ENCODE measurements at regions of chr2 and their contacts with region 1.

Region 1: DNA sequence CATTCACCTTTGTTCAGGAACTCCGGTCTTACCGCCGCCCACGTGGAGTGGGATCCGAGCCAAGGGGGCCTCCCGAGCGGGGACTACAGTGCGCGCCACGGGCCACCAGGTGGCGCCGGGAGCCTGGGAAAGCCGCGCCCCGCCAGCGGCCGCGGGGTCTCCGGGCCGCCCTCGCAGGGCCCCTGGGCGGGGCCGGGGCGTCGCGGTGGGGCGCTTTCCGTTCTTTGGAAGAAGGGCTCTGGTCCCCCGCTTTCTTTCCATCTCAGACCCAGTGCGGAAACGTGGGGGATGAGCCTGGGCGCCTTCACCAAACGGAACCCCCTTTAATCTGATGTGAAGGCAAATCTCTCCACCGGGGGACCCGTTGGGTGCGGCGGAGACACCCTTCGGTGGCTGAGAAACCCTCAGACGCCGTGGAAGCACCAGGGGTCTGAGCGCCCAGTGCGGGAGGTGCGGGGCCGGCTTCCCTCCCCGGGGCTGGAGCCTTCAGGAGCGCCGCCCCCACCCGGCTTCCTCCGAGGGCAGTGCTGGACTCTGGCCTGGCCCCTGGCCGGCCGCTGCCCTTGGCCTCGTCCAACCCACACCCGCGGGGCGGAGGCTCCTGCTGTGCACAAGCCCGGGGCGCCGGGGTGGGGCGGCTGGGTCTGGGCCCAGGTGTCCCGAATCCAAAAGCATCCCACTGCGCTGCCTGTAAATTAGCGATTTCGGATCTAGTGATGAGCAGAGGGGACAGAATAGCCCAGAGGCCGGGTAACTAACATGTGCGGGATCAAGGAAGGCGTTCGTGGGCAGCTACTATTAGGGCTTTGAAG is 44.6 kb downstream of the GORASP2 start:
- DNase-seq: peak; percentile 87 to 95
- ATAC-seq: peak; percentile 97
- H3K4me3 ChIP-seq: peak overlapping the region; percentile 29 to 40
- H3K27ac ChIP-seq: peak overlapping the region in 1 of 2 donors; percentile 9
- H3K4me1 ChIP-seq: no peaks in the 10 kb centered on the region
- H3K27me3 ChIP-seq: no peaks in the 10 kb centered on the region

Region 2: GRCh38 chr2:170639635-170640034 is 334.1 kb before region 1 on chr2:
- intact Hi-C with region 1: no loop called
- DNase-seq: no peak
- ATAC-seq: no peak
- H3K4me3 ChIP-seq: no peak overlapping the region
- H3K27ac ChIP-seq: no peak overlapping the region
- H3K4me1 ChIP-seq: no peaks in the 10 kb centered on the region
- H3K27me3 ChIP-seq: no peaks in the 10 kb centered on the region

Region 3: GRCh38 chr2:170886386-170886785 is 87.3 kb before region 1 on chr2:
- intact Hi-C with region 1: no loop called
- DNase-seq: no peak
- ATAC-seq: no peak
- H3K4me3 ChIP-seq: no peak overlapping the region
- H3K27ac ChIP-seq: no peak overlapping the region
- H3K4me1 ChIP-seq: no peaks in the 10 kb centered on the region
- H3K27me3 ChIP-seq: no peaks in the 10 kb centered on the region

Region 4: DNA sequence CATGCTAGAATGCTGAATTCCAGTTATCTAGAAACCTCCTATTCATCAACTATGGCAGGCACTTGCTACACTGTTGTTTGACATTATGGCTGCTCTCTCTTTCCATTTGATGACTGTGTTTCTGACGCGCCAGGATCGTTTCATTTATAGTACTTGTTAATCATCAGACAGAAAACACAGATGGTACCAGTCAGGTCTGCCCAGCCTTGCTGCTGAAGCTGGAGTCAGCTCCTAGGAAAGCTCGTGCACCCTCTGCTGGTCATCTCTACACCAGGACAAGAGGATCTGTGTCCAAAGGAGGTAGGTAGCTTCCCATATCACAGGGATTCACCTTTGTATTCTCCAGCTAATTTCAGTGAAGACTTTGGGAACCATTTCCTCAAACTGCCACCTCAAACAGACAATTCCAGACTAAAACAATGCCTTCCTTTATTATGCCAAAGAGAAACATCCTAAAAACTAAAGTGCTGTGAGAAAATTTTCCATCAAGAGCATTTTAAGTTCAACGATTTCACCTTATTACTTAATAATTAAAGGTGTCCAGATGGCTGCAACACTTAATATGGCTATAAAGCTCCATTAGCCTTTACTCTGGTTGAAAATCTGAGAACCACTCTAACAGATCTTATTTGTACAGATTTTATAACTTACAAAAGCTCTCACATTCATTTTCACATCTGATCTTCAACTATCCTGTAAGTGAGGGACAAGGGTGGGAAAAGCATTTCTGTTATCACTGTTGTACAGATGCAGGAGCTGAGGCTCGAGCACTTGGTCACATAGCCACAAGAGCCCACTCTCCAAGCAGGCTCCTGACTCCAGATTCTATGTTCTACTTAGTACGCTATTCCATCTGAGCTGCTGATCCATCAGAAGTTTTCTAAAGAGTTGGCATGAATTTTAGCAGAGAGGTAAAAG is 442.6 kb after region 1 on chr2:
- intact Hi-C with region 1: loop called (anchors 1 to 2 kb)
- DNase-seq: peak; percentile 90 to 92
- ATAC-seq: peak; percentile 95
- H3K4me3 ChIP-seq: no peak overlapping the region
- H3K27ac ChIP-seq: no peak overlapping the region
- H3K4me1 ChIP-seq: no peaks in the 10 kb centered on the region
- H3K27me3 ChIP-seq: no peaks in the 10 kb centered on the region

Region 5: GRCh38 chr2:171433763-171434670 is 460.3 kb after region 1 on chr2 and contains the starts of genes DCAF17 and METTL8:
- intact Hi-C with region 1: loop called in 1 of 2 experiments (anchors 5 kb)
- DNase-seq: peak; percentile 97 to 98
- ATAC-seq: peak; percentile 99
- H3K4me3 ChIP-seq: peak within 1 kb of the TSS; percentile 62 to 86
- H3K27ac ChIP-seq: peak within 1 kb of the TSS; percentile 19 to 64
- H3K4me1 ChIP-seq: peaks cover 0 to 3% of the 10 kb centered on the region in 2 donors
- H3K27me3 ChIP-seq: no peaks in the 10 kb centered on the region
- total RNA-seq, gene DCAF17: 17.5 to 20.3 TPM
- total RNA-seq, gene METTL8: 18.4 to 26.2 TPM

Measured in aorta (tissue), 5 donors.